ENCODE measurements at regions of chr1 and their contacts with region 1.

Region 1: DNA sequence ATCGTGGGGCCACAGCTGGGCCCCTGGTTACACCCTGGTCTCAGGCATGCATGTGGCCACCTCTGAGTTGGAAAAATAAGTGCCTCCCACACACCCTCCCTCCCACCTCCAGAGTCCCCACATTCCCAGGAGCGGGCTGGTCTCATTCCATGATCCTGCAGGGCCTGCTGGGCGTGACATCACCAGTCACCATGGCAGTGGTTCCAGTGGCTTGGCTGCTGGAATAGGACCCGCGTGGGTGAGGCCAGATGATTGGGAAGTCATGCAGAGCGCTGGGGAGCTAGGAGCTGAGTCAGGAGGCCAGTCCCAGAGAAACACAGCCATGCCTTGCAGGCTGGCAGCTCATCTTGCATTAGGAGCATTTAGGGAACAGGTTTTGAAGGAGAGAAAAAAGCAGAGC is 125.4 kb upstream of the TMEM51 start:
- DNase-seq: no peak
- H3K4me3 Mint-ChIP-seq: no peak overlapping the region
- H3K27ac Mint-ChIP-seq: no peak overlapping the region
- H3K4me1 Mint-ChIP-seq: peaks cover 9% of the 10 kb centered on the region
- H3K27me3 Mint-ChIP-seq: no peaks in the 10 kb centered on the region
- CTCF ChIP-seq: no peak

Region 2: GRCh38 chr1:14113841-14114567 is 914.1 kb before region 1 on chr1:
- CTCF ChIA-PET with region 1: interaction called, 5 read pairs
- POLR2A ChIA-PET with region 1: interaction called, 3 read pairs
- intact Hi-C with region 1: loop called (anchors 1 kb)
- DNase-seq: peak; percentile 65
- H3K4me3 Mint-ChIP-seq: no peak overlapping the region
- H3K27ac Mint-ChIP-seq: no peak overlapping the region
- H3K4me1 Mint-ChIP-seq: peaks cover 43% of the 10 kb centered on the region
- H3K27me3 Mint-ChIP-seq: no peaks in the 10 kb centered on the region
- CTCF ChIP-seq: peak; percentile 82

Region 3: DNA sequence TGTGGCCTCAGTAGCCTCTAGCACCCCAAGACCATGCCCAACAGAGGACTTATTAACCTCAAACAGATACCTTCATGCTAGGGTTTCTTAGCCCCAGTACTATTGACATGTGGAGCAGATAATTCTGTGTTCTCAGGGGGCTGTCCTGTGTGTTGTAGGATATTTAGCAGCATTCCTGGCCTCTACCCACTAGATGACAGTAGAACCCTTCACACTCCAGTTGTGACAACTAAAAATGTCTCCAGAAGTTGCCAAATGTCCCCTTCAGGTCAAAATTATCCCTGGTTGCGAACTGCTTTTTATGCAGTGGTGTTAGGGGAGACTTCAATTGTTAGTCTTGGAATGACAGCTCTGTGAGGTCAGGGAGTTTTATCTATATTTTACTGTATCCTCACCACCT is 421.5 kb before region 1 on chr1:
- CTCF ChIA-PET with region 1: interaction called, 9 read pairs
- POLR2A ChIA-PET with region 1: no interaction called
- intact Hi-C with region 1: loop called (anchors 2 kb)
- DNase-seq: peak; percentile 6
- H3K4me3 Mint-ChIP-seq: no peak overlapping the region
- H3K27ac Mint-ChIP-seq: no peak overlapping the region
- H3K4me1 Mint-ChIP-seq: no peaks in the 10 kb centered on the region
- H3K27me3 Mint-ChIP-seq: peaks cover 7% of the 10 kb centered on the region
- CTCF ChIP-seq: peak; percentile 37

Region 4: GRCh38 chr1:14915356-14916054 is 112.6 kb before region 1 on chr1:
- CTCF ChIA-PET with region 1: interaction called, 14 read pairs
- POLR2A ChIA-PET with region 1: no interaction called
- intact Hi-C with region 1: no loop called
- DNase-seq: peak; percentile 59
- H3K4me3 Mint-ChIP-seq: no peak overlapping the region
- H3K27ac Mint-ChIP-seq: no peak overlapping the region
- H3K4me1 Mint-ChIP-seq: peaks cover 11% of the 10 kb centered on the region
- H3K27me3 Mint-ChIP-seq: no peaks in the 10 kb centered on the region
- CTCF ChIP-seq: peak; percentile 89

Region 5: DNA sequence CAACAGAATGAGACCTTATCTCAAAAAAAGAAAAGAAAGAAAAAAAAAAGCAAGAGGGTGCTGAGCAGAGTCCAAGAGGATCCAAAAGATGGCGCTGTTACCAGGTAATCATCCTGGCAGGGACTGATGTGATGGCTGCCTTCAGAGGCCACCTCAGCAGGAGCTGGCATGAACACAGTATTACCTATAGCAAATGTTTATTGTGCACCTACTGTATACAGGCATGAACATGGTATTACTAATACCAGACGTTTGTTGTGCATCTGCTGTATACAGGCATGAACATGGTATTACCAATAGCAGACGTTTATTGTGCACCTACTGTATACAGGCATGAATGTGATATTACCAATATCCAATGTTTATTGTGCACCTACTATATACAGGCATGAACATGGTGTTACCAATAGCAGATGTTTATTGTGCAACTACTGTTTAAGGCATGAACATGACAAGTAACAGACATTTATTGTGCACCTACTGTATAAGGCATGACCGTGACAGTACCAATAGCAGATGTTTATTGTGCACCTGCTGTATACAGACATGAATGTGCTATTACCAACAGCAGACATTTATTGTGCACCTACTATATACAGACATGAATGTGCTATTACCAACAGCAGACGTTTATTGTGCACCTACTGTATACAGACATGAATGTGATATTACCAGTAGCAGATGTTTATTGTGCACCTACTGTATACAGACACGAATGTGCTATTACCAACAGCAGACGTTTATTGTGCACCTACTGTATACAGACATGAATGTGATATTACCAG is 10.3 kb after region 1 on chr1:
- CTCF ChIA-PET with region 1: interaction called, 23 read pairs
- POLR2A ChIA-PET with region 1: interaction called, 3 read pairs
- intact Hi-C with region 1: no loop called
- DNase-seq: peak; percentile 54
- H3K4me3 Mint-ChIP-seq: no peak overlapping the region
- H3K27ac Mint-ChIP-seq: no peak overlapping the region
- H3K4me1 Mint-ChIP-seq: no peaks in the 10 kb centered on the region
- H3K27me3 Mint-ChIP-seq: no peaks in the 10 kb centered on the region
- CTCF ChIP-seq: peak; percentile 27

Region 6: DNA sequence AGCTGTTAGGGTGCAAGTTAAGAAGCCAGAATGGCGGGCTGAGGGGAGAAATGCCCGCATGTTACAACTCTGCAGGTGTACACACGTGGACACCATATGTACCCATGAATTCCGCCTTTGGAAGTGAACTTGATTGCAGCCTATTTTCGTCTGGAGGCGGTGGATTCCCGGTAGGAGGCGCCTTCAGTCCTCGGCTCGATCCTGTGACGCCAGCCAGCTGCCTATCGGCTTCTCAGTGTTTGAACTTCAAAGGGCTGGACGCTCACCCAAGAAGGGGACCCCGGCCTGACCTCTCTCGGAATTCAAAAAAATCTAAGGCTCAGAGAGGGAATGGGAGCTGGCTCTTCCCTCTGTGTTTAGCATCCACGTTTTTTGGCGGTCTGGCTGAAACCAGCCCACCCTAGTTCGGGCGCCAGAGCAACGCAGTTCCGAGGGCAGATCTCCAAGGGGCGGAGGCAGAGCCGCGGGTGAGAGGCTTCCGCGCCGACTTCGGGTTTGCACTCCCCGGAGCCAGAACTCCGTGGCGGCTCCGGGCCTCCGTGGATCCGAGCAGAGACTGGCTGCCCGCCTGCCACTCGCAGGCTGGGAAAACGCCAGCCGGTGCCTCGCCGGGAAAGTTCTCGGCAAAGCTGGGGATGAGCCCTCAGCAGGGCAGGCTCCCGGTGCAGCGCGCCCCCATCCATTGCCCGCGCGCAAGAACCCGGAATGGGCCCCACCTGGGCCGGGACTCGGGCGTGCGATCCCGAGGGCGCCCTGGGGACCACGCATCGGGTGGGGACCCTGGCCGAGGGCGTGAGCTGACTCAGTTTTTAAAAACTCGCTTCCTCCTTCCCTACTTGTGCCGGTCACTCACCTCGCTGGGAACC is 124.4 kb after region 1 on chr1:
- CTCF ChIA-PET with region 1: no interaction called
- POLR2A ChIA-PET with region 1: no interaction called
- intact Hi-C with region 1: no loop called
- DNase-seq: peak; percentile 92
- H3K4me3 Mint-ChIP-seq: peak overlapping the region; percentile 85
- H3K27ac Mint-ChIP-seq: peak overlapping the region; percentile 42
- H3K4me1 Mint-ChIP-seq: peaks cover 6% of the 10 kb centered on the region
- H3K27me3 Mint-ChIP-seq: no peaks in the 10 kb centered on the region
- CTCF ChIP-seq: peak; percentile 45